Head of caudate nucleus (tissue), 42 donors: ENCODE measurements at regions of chr12 and their contacts with region 1.

Region 1: GRCh38 chr12:50074936-50075807 is 10.0 kb upstream of the SMARCD1 start:
- DNase-seq: peak; percentile 74 to 94 (median 87)

Region 2: DNA sequence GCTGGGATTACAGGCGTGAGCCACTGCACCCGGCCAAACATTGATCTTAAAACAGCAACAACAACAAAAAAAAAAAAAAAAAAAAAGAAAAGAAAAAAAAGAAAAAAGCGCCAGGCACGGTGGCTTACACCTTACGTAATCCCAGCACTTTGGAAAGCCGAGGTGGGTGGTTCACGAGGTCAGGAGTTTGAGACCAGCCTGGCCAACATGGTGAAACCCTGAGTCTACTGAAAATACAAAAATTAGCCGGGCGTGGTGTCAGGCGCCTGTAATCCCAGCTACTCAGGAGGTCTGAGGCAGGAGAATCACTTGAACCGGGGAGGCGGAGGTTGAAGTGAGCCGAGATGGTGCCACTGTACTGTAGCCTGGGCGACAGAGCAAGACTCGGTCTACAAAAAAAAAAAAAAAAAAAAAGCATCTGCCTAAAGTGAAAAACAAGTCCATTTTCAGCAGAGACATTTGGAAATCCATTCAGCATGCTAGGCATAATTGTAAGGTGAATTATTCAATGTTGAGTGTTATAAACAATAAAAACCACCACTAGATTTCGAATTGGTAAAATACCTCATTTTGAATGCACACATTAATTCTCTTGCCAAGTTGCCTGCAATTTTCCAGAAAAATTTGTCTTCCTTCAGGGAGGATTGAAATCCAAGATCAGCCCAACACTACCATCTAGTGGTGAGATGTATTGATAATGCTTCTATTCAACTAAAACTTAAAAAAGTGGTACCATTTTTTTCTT is 100.0 kb after region 1 on chr12:
- intact Hi-C with region 1: loop called (anchors 5 kb)
- DNase-seq: peak in 15 of 42 donors; percentile 1 to 75 (median 52)